ENCODE measurements at regions of chr1 and their contacts with region 1.

Region 1: DNA sequence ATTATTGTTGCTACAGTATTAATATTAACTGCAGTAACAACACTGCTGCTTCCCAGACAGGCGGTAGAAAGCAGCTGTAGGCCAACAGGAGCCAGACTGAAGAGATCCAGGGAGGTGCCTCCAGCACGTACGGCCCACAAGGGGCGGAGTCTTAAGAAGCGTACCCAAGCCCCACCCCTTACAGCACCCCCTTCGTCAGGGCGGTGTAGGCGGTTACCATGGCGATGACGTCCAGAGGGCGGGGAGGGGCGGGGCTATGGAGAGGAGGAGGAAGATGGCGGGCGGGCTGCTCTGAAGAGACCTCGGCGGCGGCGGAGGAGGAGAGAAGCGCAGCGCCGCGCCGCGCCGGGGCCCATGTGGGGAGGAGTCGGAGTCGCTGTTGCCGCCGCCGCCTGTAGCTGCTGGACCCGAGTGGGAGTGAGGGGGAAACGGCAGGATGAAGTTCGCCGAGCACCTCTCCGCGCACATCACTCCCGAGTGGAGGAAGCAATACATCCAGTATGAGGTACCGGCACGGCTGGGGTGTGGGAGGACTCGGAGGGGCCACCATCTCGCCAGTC is at the start of gene XPR1:
- DNase-seq: peak; percentile 96 to 100 (median 98)
- ATAC-seq: peak; percentile 95
- H3K4me3 ChIP-seq: peak within 1 kb of the TSS; percentile 89
- H3K4me3 Mint-ChIP-seq: peak within 1 kb of the TSS; percentile 91
- H3K27ac ChIP-seq: peak within 1 kb of the TSS; percentile 81 to 94
- H3K27ac Mint-ChIP-seq: no peak within 1 kb of the TSS
- H3K4me1 ChIP-seq: peaks cover 7% of the 10 kb centered on the region
- H3K4me1 Mint-ChIP-seq: peaks cover 17% of the 10 kb centered on the region
- H3K27me3 ChIP-seq: no peaks in the 10 kb centered on the region
- H3K27me3 Mint-ChIP-seq: no peaks in the 10 kb centered on the region
- CTCF ChIP-seq: no peak
- total RNA-seq, gene XPR1: 13.7 TPM

Region 2: DNA sequence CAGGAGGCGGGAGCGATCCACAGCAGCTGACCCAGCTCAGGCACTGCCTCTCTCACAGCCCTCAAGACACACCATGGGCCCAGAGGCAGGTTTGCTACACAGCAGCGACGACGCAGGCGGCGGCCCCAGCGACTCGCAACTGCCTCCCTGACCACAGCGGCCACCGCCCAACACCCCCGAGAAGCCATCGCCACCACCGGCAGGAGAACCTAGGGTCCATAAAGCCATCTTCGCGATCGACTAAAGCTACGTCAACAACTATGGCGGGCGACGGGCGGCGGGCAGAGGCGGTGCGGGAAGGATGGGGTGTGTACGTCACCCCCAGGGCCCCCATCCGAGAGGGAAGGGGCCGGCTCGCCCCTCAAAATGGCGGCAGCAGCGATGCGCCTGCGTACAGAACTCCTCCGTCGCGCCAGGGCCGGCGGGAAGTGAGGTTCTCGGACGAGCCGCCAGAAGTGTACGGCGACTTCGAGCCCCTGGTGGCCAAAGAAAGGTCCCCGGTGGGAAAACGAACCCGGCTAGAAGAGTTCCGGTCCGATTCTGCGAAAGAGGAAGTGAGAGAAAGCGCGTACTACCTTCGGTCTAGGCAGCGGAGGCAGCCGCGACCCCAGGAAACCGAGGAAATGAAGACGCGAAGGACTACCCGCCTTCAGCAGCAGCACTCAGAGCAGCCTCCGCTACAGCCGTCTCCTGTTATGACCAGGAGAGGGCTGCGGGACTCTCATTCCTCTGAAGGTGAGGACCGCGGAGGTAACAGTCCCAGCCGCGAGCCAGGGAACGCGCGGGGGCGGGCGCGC is 749.4 kb before region 1 on chr1 and contains the start of gene TOR1AIP1:
- CTCF ChIA-PET with region 1: no interaction called
- POLR2A ChIA-PET with region 1: no interaction called
- intact Hi-C with region 1: loop called in 1 of 2 experiments (anchors 10 kb)
- DNase-seq: peak; percentile 95 to 99 (median 96)
- ATAC-seq: peak; percentile 73
- H3K4me3 ChIP-seq: peak within 1 kb of the TSS; percentile 83
- H3K4me3 Mint-ChIP-seq: peak within 1 kb of the TSS; percentile 98
- H3K27ac ChIP-seq: peak within 1 kb of the TSS; percentile 99
- H3K27ac Mint-ChIP-seq: peak within 1 kb of the TSS; percentile 100
- H3K4me1 ChIP-seq: peaks cover 26% of the 10 kb centered on the region
- H3K4me1 Mint-ChIP-seq: peaks cover 60% of the 10 kb centered on the region
- H3K27me3 ChIP-seq: no peaks in the 10 kb centered on the region
- H3K27me3 Mint-ChIP-seq: no peaks in the 10 kb centered on the region
- CTCF ChIP-seq: peak; percentile 16
- total RNA-seq, gene TOR1AIP1: 93.8 to 94.4 TPM

Region 3: GRCh38 chr1:180343931-180344769 is 287.7 kb before region 1 on chr1:
- CTCF ChIA-PET with region 1: no interaction called
- POLR2A ChIA-PET with region 1: no interaction called
- intact Hi-C with region 1: no loop called
- DNase-seq: no peak
- ATAC-seq: no peak
- H3K4me3 ChIP-seq: no peak overlapping the region
- H3K4me3 Mint-ChIP-seq: no peak overlapping the region
- H3K27ac ChIP-seq: no peak overlapping the region
- H3K27ac Mint-ChIP-seq: no peak overlapping the region
- H3K4me1 ChIP-seq: no peaks in the 10 kb centered on the region
- H3K4me1 Mint-ChIP-seq: peaks cover 20% of the 10 kb centered on the region
- H3K27me3 ChIP-seq: no peaks in the 10 kb centered on the region
- H3K27me3 Mint-ChIP-seq: no peaks in the 10 kb centered on the region
- CTCF ChIP-seq: no peak

Region 4: DNA sequence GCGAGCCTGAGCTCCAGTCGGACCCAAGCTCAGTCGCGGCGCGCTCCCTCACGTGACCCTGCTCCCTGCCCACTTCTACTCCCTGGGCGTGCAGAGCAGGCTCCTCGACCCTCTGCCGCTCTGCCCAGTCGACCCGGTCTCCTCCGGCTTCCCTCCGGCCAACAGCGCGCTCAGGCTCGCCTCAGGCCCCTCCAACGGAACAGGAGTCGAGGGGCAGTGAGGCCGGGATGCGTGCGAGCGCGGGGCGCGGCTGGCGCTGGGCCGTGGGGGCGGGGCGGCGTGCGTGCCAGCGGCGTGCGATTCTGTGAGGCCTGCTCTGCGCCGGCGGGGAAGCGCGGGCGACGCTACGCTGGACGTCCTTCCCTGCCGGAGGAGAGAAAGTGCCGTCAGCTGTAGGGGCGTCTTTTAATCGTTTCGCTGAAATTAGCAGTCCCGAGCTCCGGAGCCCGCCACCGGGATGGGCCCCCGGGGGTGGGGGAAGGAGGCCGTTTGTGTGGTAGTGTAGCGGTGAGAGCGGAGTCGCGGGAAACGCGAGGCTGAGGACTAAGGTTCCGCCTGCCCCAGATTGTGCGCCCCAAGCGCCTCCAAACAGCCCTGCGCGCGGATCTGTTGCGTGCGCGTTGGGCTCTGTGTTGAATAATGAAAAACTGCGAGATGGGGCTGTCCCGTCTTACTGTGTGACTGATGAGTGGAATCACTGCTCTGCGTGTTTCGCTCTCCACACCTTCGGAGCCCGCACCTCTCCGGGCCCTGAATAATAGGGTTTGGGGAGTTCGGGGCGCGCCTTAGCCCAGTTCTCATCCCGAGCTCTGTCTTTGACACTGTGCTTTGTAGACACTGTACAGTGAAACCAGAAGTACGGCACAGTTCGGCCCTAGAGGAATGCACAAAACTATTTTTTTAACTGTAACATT is 129.2 kb before region 1 on chr1 and contains the start of gene ACBD6:
- CTCF ChIA-PET with region 1: interaction called, 3 read pairs
- POLR2A ChIA-PET with region 1: interaction called, 14 read pairs
- intact Hi-C with region 1: loop called (anchors 5 kb)
- DNase-seq: peak; percentile 76 to 94 (median 83)
- ATAC-seq: peak; percentile 90
- H3K4me3 ChIP-seq: peak within 1 kb of the TSS; percentile 98
- H3K4me3 Mint-ChIP-seq: peak within 1 kb of the TSS; percentile 92
- H3K27ac ChIP-seq: peak within 1 kb of the TSS; percentile 74 to 85
- H3K27ac Mint-ChIP-seq: peak within 1 kb of the TSS; percentile 94
- H3K4me1 ChIP-seq: peaks cover 23% of the 10 kb centered on the region
- H3K4me1 Mint-ChIP-seq: peaks cover 43% of the 10 kb centered on the region
- H3K27me3 ChIP-seq: no peaks in the 10 kb centered on the region
- H3K27me3 Mint-ChIP-seq: no peaks in the 10 kb centered on the region
- CTCF ChIP-seq: no peak
- total RNA-seq, gene ACBD6: 28.2 to 28.8 TPM

Region 5: DNA sequence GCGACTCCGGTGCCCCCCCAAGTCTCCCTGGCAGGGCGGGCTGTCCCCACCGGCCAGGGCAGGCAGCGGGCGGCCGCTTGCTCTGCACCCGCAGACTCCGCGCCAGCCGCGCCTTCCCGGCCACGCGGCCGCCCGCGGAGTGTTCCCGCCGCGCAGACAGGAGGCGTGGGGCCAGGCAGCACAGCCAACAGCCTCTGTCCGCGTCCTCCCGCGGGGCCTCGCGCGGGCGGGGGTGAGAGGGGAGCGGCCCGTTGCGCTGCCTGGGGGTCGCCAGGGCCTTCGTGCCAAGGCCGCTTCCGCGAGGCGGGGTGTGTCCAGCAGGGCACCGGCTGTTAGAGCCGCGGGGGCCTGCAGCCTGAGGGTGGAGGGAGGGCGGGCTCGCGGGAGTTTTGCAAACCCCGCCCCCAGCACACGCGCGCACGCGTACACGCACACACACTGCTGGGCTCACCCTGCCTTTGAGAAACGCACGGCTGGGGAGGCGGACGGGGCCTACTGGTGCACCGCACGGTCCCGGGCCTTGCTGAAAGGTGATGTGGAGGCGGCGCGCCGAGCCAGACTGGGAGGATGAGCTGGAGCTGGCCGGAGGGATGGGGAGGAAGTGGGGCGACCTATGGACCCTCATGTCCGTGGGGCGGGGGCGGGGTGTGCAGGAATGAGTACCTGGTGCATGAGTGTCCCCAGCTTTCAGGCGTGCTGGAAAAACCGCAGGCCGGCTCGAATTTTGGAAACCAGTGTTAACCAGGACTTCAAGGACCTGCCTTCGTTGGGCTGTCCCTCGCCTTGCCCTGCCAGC is 322.4 kb after region 1 on chr1:
- CTCF ChIA-PET with region 1: no interaction called
- POLR2A ChIA-PET with region 1: no interaction called
- intact Hi-C with region 1: loop called in 1 of 2 experiments (anchors 10 kb)
- DNase-seq: peak; percentile 38 to 89 (median 64)
- ATAC-seq: peak; percentile 95
- H3K4me3 ChIP-seq: peak overlapping the region; percentile 54
- H3K4me3 Mint-ChIP-seq: peak overlapping the region; percentile 72
- H3K27ac ChIP-seq: no peak overlapping the region
- H3K27ac Mint-ChIP-seq: peak overlapping the region; percentile 17
- H3K4me1 ChIP-seq: peaks cover 15% of the 10 kb centered on the region
- H3K4me1 Mint-ChIP-seq: peaks cover 4% of the 10 kb centered on the region
- H3K27me3 ChIP-seq: no peaks in the 10 kb centered on the region
- H3K27me3 Mint-ChIP-seq: no peaks in the 10 kb centered on the region
- CTCF ChIP-seq: no peak

Region 6: DNA sequence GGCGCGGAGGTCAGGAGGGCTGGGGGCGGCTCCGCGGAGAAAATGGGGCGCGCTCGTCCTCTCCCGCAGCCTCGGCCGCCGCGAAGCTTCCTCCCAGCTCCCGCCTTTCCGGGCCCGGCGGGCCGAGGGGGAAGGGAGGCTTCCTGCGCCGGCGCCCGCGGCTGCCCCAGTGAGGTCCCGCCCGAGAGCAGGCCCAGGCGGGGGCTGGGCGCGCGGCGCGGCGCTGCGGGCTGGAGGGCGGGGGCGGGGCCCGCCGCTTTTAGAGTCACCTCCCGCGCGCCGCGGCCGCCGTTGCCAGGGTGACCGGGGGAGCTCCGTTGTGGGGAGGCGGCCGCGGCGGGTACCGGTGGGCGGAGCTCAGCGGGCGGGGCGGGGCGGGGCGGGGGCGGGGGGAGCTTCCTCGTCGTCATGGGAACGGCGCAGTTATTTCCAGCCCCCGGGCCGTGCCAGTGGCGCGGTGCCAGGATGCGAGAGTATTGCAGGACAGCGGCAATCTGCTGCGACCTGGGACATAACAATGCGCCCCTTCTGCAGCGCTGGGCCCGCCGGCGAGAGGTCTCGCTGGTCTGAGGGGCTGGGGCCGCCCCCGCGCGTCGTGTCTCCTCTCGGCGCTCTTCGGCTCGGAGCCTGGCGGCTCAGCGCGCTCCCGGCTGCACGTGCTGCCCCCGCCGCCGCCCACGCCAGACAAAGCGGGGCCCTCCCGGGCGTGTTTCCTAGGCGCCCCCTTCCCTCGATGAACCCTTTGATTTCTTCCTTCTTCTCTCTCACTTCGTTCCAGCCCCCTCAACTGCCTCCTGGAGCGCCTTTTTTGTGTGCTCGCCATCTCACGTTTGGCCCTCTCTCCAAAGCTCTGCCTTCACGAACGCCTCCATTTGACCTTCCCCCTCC is 473.5 kb after region 1 on chr1:
- CTCF ChIA-PET with region 1: interaction called, 3 read pairs
- POLR2A ChIA-PET with region 1: no interaction called
- intact Hi-C with region 1: loop called in 1 of 2 experiments (anchors 5 kb)
- DNase-seq: peak; percentile 86 to 97 (median 94)
- ATAC-seq: peak; percentile 88
- H3K4me3 ChIP-seq: peak overlapping the region; percentile 80
- H3K4me3 Mint-ChIP-seq: peak overlapping the region; percentile 88
- H3K27ac ChIP-seq: peak overlapping the region; percentile 58 to 72
- H3K27ac Mint-ChIP-seq: peak overlapping the region; percentile 67
- H3K4me1 ChIP-seq: peaks cover 49% of the 10 kb centered on the region
- H3K4me1 Mint-ChIP-seq: peaks cover 60% of the 10 kb centered on the region
- H3K27me3 ChIP-seq: no peaks in the 10 kb centered on the region
- H3K27me3 Mint-ChIP-seq: no peaks in the 10 kb centered on the region
- CTCF ChIP-seq: peak; percentile 1

Region 7: DNA sequence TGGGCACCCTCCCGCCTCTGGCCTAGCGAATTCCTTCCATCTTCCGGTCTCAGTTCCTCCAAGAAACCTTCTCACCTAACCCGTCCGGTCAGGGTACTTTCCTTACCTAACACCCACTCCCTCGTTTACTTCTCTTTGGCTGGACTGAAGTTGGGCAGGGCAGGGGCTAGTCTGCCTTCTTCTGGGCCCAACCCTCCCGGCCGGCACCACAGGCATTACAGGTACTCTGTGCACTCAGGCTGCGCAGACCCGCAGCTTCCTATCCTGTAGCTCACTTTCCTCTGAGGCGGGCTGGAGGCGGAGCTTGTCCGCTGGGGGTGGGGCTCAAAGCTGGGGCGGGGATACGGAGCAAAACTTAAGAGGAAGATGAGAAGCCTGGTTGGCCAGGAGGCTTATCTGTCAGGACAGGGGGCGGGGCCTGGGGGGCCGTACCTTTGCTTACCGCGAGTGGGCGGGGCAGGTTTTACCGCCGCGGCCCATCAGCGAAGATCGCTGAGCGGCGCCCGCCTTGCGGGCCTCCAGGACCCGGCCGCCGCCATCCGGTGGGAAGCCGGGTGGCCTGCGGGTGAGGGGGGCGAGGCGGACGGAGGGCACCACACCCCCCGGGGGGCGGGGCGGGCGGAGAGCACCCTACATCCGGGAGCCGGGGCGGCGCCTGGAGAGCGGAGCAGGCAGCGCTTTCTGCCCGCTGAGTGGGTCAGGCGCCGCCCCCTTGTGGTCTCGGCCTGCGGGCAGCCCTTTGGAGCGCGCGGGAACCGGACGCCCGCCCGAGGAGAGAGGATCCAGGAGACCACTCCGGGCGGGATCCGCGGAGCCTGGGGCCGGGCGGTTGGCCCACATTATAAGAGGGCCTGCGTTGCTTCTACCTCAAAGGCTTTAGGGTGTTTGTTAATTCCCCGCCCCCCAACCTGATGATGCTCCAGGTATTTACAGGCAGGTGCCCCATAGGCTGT is 1397.8 kb after region 1 on chr1:
- CTCF ChIA-PET with region 1: no interaction called
- POLR2A ChIA-PET with region 1: no interaction called
- intact Hi-C with region 1: loop called in 1 of 2 experiments (anchors 5 kb)
- DNase-seq: peak; percentile 96 to 99 (median 98)
- ATAC-seq: peak; percentile 91
- H3K4me3 ChIP-seq: peak overlapping the region; percentile 76
- H3K4me3 Mint-ChIP-seq: peak overlapping the region; percentile 90
- H3K27ac ChIP-seq: peak overlapping the region; percentile 72 to 81
- H3K27ac Mint-ChIP-seq: peak overlapping the region; percentile 84
- H3K4me1 ChIP-seq: peaks cover 13% of the 10 kb centered on the region
- H3K4me1 Mint-ChIP-seq: peaks cover 16% of the 10 kb centered on the region
- H3K27me3 ChIP-seq: no peaks in the 10 kb centered on the region
- H3K27me3 Mint-ChIP-seq: no peaks in the 10 kb centered on the region
- CTCF ChIP-seq: peak; percentile 45